ENCODE measurements at regions of chr3 and their contacts with region 1.

Region 1: GRCh38 chr3:141452036-141452435 is 34.8 kb upstream of the RASA2 start:
- DNase-seq: peak; percentile 83
- H3K4me3 ChIP-seq: no peak overlapping the region
- H3K27ac ChIP-seq: no peak overlapping the region
- H3K4me1 ChIP-seq: peaks cover 12% of the 10 kb centered on the region
- H3K27me3 ChIP-seq: no peaks in the 10 kb centered on the region
- CTCF ChIP-seq: peak; percentile 59 to 62
- POLR2A ChIP-seq: no peak

Region 2: GRCh38 chr3:141231101-141231935 is 220.7 kb before region 1 on chr3 and contains the start of gene PXYLP1:
- CTCF ChIA-PET with region 1: interaction called, 19 read pairs
- POLR2A ChIA-PET with region 1: no interaction called
- dilution Hi-C with region 1: no loop called
- intact Hi-C with region 1: loop called (anchors 1 kb)
- DNase-seq: peak; percentile 83
- H3K4me3 ChIP-seq: peak within 1 kb of the TSS; percentile 65 to 75 (median 72)
- H3K27ac ChIP-seq: no peak within 1 kb of the TSS
- H3K4me1 ChIP-seq: peaks cover 8% of the 10 kb centered on the region
- H3K27me3 ChIP-seq: peaks cover 11 to 31% of the 10 kb centered on the region in 2 experiments
- CTCF ChIP-seq: peak; percentile 63 to 77
- POLR2A ChIP-seq: peak; percentile 61
- total RNA-seq, gene PXYLP1: 0.88 and 1.7 TPM in 2 replicates

Region 3: GRCh38 chr3:141346418-141346817 is 105.6 kb before region 1 on chr3:
- CTCF ChIA-PET with region 1: interaction called, 13 read pairs
- POLR2A ChIA-PET with region 1: no interaction called
- dilution Hi-C with region 1: no loop called
- intact Hi-C with region 1: no loop called
- DNase-seq: peak; percentile 58
- H3K4me3 ChIP-seq: no peak overlapping the region
- H3K27ac ChIP-seq: no peak overlapping the region
- H3K4me1 ChIP-seq: peaks cover 12% of the 10 kb centered on the region
- H3K27me3 ChIP-seq: peaks cover 0 to 2% of the 10 kb centered on the region in 2 experiments
- CTCF ChIP-seq: no peak
- POLR2A ChIP-seq: no peak

Region 4: DNA sequence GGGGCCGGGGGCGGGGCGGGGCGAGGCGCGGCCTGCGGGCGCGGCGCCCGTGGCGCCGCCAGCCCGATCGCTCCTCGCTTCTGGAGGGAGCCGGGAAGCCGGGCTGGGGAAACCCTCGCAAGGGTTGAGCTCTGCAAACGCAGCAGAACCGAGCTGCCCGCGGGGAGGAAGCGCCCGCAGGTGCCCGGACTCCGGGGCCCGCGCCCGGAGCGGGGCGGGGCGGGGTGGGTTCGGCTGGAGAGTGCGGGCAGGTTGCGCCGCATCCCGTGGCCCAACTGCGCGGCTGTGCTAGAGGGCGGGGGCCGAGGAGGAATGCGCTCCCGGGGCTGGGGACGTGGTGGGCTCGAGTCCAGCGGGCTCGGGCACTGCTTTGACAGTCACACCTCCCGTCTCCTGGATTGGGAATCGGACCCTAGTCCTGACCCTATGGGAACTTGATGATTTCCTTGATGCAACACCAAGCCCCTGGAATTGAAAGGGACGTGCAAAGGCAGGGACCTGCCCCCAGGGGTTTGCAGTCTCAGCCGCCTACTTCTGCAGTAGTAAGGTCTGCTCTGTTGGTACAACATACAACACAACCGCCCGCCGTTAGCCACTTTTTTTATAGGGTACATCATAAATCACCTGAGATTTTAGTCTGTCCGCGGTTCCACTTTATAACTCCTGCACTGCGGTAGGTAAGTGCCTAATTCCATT is 49.4 kb before region 1 on chr3:
- CTCF ChIA-PET with region 1: interaction called, 10 read pairs
- POLR2A ChIA-PET with region 1: no interaction called
- dilution Hi-C with region 1: no loop called
- intact Hi-C with region 1: no loop called
- DNase-seq: peak; percentile 76
- H3K4me3 ChIP-seq: peak overlapping the region; percentile 8 to 86 (median 65)
- H3K27ac ChIP-seq: peak overlapping the region; percentile 97
- H3K4me1 ChIP-seq: peaks cover 47% of the 10 kb centered on the region
- H3K27me3 ChIP-seq: no peaks in the 10 kb centered on the region
- CTCF ChIP-seq: peak in 1 of 2 donors; percentile 2
- POLR2A ChIP-seq: peak; percentile 60

Region 5: DNA sequence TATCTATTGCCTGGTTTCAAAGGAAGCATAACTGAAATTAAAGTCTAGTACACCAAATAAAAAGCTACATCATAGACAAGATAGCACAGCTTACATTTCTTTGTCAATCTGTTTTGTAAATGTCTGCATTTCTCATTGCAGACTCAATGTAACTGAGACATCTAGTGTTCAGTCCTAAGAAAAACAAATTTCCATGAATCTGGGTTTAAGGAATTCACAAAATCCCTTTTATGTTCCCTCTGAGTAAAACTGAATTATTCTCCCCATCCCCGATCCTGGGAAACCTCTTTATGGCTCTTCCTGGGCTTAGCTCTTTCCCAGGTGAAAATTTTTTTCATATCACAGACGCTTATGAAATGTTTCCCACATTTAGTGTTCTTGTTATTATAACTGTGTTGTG is 13.2 kb after region 1 on chr3:
- CTCF ChIA-PET with region 1: interaction called, 14 read pairs
- POLR2A ChIA-PET with region 1: no interaction called
- dilution Hi-C with region 1: no loop called
- intact Hi-C with region 1: no loop called
- DNase-seq: no peak
- H3K4me3 ChIP-seq: no peak overlapping the region
- H3K27ac ChIP-seq: no peak overlapping the region
- H3K4me1 ChIP-seq: no peaks in the 10 kb centered on the region
- H3K27me3 ChIP-seq: no peaks in the 10 kb centered on the region
- CTCF ChIP-seq: no peak
- POLR2A ChIP-seq: no peak

Measured in endothelial cell of umbilical vein (primary cell).